Adrenal gland (tissue), 19 donors: ENCODE measurements at regions of chr19 and their contacts with region 1.

Region 1: GRCh38 chr19:40549007-40549708 is 27.5 kb upstream of the SHKBP1 start:
- DNase-seq: peak in 5 of 7 donors; percentile 42 to 72 (median 59)
- H3K4me3 ChIP-seq: no peak overlapping the region
- H3K27ac ChIP-seq: no peak overlapping the region
- H3K4me1 ChIP-seq: peaks cover 0 to 3% of the 10 kb centered on the region in 2 donors
- H3K27me3 ChIP-seq: peaks cover 5% of the 10 kb centered on the region
- CTCF ChIP-seq: peak in 4 of 6 experiments; percentile 25 to 49 (median 36)
- POLR2A ChIP-seq: no peak

Region 2: DNA sequence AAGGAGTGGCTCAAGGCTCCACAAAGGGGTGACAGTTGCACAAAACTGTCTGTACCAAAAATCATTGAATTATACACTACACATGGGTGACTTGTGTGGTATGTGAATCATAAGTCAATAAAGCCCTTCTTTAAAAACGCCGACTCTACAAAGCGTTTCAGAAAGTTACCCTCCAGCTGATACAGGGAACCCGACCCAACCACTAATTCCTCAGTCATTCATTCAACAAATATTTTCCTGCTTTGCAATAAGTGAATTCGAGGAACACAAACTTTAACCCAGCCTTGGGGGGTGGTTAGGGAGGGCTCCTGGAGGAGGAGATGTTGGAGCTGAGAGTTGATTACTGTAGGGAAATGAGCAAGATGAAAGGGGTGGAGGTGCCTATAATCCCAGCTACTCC is 84.0 kb after region 1 on chr19:
- intact Hi-C with region 1: loop called in 1 of 2 experiments (anchors 10 kb)
- DNase-seq: no peak
- H3K4me3 ChIP-seq: no peak overlapping the region
- H3K27ac ChIP-seq: no peak overlapping the region
- H3K4me1 ChIP-seq: no peaks in the 10 kb centered on the region
- H3K27me3 ChIP-seq: no peaks in the 10 kb centered on the region
- CTCF ChIP-seq: no peak
- POLR2A ChIP-seq: no peak

Region 3: DNA sequence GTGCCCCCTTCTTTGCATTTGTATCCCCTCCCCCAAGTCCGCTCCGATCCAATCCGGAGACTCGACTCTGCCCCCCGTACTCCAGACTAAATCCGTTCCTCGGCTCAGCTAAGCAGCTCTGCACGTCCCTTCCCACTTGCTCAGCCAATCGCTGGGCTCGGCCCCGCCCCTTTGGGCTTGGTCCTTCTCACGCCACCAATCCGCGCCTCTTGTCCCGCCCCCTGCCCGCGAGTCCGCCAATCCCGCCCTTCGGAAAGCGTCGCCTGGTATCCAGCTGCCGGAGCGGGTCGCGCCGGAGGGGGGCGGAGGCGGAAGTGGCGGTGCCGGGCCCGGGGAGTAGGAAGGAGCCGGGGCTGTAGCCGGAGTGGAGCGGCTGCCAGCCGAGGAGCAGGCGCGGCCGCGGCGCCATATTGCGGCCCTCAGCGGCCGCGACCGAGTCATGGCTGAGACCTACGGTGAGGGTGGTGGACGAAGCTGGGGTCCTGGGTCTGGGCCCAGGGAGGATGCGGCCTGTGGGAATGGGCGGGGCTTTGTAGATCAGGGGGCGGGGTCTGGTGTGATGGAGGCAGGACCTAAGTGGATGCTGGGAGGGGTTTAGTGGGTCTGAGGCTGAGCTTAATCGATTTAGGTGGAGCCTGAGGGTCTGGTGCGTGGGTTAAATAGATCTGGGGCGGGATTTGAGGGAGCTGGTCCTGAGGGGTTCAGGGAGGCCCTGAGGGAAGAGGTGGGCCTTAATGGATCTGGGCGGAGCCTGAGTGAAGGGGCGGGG is 229.0 kb after region 1 on chr19 and contains the start of gene RAB4B:
- intact Hi-C with region 1: no loop called
- DNase-seq: peak; percentile 100
- H3K4me3 ChIP-seq: peak within 1 kb of the TSS in 3 of 4 donors; percentile 56 to 65 (median 59)
- H3K27ac ChIP-seq: peak within 1 kb of the TSS; percentile 89 to 99 (median 99)
- H3K4me1 ChIP-seq: peaks cover 0 to 15% of the 10 kb centered on the region in 2 donors
- H3K27me3 ChIP-seq: no peaks in the 10 kb centered on the region
- CTCF ChIP-seq: peak in 2 of 6 experiments; percentile 21 to 23
- POLR2A ChIP-seq: peak; percentile 50 to 95
- total RNA-seq, gene RAB4B: 41.4 to 105 (median 66.4) TPM